ENCODE measurements at regions of chr3 and their contacts with region 1.

Region 1: DNA sequence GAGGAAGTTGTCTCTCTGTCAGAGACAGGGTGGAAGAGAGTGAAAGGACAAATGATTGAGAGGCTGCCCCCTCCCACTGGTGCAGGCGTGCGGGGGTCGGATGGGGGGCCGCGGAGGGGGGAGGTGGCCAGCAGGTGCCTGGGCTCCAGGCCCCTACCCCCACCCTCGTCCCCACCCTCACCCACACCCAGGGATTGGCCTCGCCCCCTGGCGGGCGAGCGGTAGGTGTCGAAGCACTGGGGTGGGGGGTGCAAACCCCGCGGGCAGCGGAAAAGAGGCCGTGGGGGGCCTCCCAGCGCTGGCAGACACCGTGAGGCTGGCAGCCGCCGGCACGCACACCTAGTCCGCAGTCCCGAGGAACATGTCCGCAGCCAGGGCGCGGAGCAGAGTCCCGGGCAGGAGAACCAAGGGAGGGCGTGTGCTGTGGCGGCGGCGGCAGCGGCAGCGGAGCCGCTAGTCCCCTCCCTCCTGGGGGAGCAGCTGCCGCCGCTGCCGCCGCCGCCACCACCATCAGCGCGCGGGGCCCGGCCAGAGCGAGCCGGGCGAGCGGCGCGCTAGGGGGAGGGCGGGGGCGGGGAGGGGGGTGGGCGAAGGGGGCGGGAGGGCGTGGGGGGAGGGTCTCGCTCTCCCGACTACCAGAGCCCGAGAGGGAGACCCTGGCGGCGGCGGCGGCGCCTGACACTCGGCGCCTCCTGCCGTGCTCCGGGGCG is at the start of gene KAT2B:
- DNase-seq: peak; percentile 66 to 94 (median 81)
- ATAC-seq: peak; percentile 66
- H3K4me3 ChIP-seq: peak within 1 kb of the TSS; percentile 94
- H3K4me3 Mint-ChIP-seq: peak within 1 kb of the TSS; percentile 99
- H3K27ac ChIP-seq: peak within 1 kb of the TSS; percentile 86 to 90
- H3K27ac Mint-ChIP-seq: peak within 1 kb of the TSS; percentile 99
- H3K4me1 ChIP-seq: peaks cover 51% of the 10 kb centered on the region
- H3K4me1 Mint-ChIP-seq: peaks cover 60% of the 10 kb centered on the region
- H3K27me3 ChIP-seq: no peaks in the 10 kb centered on the region
- H3K27me3 Mint-ChIP-seq: no peaks in the 10 kb centered on the region
- CTCF ChIP-seq: peak; percentile 90
- total RNA-seq, gene KAT2B: 50.9 to 54.4 TPM

Region 2: DNA sequence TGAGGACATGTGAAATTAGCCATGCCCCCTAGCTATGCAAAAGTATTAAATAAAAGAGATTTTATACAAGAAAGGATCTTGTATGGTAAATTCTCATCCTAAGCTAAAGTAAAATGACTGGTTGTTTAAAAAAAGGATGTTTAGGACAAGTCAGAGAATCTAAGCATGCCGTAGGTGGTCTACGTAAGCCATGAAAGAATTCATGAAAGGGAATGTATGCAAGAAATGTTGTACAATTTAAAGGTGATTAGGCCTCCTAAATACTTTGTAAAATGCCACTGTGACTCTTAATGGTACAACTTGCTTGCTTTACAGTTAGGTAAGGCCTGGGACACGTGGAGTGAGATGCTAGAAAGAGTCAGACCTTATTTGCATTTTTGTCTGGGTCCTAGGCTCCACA is 314.9 kb before region 1 on chr3:
- CTCF ChIA-PET with region 1: no interaction called
- POLR2A ChIA-PET with region 1: no interaction called
- intact Hi-C with region 1: no loop called
- DNase-seq: no peak
- ATAC-seq: no peak
- H3K4me3 ChIP-seq: no peak overlapping the region
- H3K4me3 Mint-ChIP-seq: no peak overlapping the region
- H3K27ac ChIP-seq: no peak overlapping the region
- H3K27ac Mint-ChIP-seq: no peak overlapping the region
- H3K4me1 ChIP-seq: no peaks in the 10 kb centered on the region
- H3K4me1 Mint-ChIP-seq: no peaks in the 10 kb centered on the region
- H3K27me3 ChIP-seq: no peaks in the 10 kb centered on the region
- H3K27me3 Mint-ChIP-seq: no peaks in the 10 kb centered on the region
- CTCF ChIP-seq: no peak

Region 3: DNA sequence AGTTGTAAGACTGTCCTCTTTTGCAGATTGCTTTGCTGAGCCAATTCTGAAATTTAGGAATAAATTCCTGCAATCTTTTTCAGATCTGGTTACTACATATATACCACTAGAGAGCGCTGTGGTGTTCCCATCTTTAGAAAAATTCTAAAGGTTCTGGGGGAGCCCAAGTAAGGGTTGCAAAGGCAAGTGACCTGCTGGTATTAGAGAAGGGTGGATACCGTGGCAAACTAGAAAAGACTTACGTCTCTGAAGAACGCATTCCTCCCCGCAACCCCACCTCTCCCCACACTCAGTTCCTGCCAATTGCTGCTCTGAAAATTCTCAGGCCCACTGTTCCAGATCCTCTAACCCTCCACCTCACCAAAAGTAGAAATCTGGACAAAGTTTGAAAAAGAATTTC is 154.5 kb before region 1 on chr3:
- CTCF ChIA-PET with region 1: no interaction called
- POLR2A ChIA-PET with region 1: no interaction called
- intact Hi-C with region 1: loop called in 1 of 2 experiments (anchors 5 kb)
- DNase-seq: peak in 3 of 14 experiments; percentile 38 to 50 (median 46)
- ATAC-seq: no peak
- H3K4me3 ChIP-seq: no peak overlapping the region
- H3K4me3 Mint-ChIP-seq: no peak overlapping the region
- H3K27ac ChIP-seq: no peak overlapping the region
- H3K27ac Mint-ChIP-seq: no peak overlapping the region
- H3K4me1 ChIP-seq: no peaks in the 10 kb centered on the region
- H3K4me1 Mint-ChIP-seq: no peaks in the 10 kb centered on the region
- H3K27me3 ChIP-seq: no peaks in the 10 kb centered on the region
- H3K27me3 Mint-ChIP-seq: no peaks in the 10 kb centered on the region
- CTCF ChIP-seq: peak; percentile 63

Region 4: DNA sequence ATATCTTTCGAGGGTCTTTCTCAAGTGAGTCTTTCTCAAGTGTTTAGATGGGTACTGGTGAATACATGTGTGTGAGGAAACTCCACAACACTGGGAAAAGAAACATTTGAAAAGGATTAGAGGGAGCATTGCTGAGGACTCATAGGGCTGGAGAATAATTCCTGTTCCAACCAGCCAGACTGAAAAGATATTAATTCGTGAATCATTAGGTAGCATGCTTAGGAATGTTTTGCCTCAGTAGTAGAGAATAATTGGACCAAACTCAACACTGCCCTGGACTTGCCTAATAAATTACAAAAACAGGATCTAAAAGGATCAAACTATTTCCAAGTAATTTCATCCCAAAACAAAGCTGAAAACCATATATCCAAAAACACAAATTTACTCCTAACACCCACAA is 45.1 kb before region 1 on chr3:
- CTCF ChIA-PET with region 1: no interaction called
- POLR2A ChIA-PET with region 1: interaction called, 4 read pairs
- intact Hi-C with region 1: loop called (anchors 5 to 10 kb)
- DNase-seq: no peak
- ATAC-seq: no peak
- H3K4me3 ChIP-seq: no peak overlapping the region
- H3K4me3 Mint-ChIP-seq: no peak overlapping the region
- H3K27ac ChIP-seq: no peak overlapping the region
- H3K27ac Mint-ChIP-seq: no peak overlapping the region
- H3K4me1 ChIP-seq: no peaks in the 10 kb centered on the region
- H3K4me1 Mint-ChIP-seq: no peaks in the 10 kb centered on the region
- H3K27me3 ChIP-seq: no peaks in the 10 kb centered on the region
- H3K27me3 Mint-ChIP-seq: no peaks in the 10 kb centered on the region
- CTCF ChIP-seq: no peak

Region 5: GRCh38 chr3:20074226-20075063 is 34.5 kb after region 1 on chr3:
- CTCF ChIA-PET with region 1: interaction called, 3 read pairs
- POLR2A ChIA-PET with region 1: interaction called, 6 read pairs
- intact Hi-C with region 1: loop called in 1 of 2 experiments (anchors 5 kb)
- DNase-seq: no peak
- ATAC-seq: no peak
- H3K4me3 ChIP-seq: no peak overlapping the region
- H3K4me3 Mint-ChIP-seq: no peak overlapping the region
- H3K27ac ChIP-seq: no peak overlapping the region
- H3K27ac Mint-ChIP-seq: no peak overlapping the region
- H3K4me1 ChIP-seq: peaks cover 2% of the 10 kb centered on the region
- H3K4me1 Mint-ChIP-seq: peaks cover 4% of the 10 kb centered on the region
- H3K27me3 ChIP-seq: no peaks in the 10 kb centered on the region
- H3K27me3 Mint-ChIP-seq: no peaks in the 10 kb centered on the region
- CTCF ChIP-seq: no peak

Region 6: DNA sequence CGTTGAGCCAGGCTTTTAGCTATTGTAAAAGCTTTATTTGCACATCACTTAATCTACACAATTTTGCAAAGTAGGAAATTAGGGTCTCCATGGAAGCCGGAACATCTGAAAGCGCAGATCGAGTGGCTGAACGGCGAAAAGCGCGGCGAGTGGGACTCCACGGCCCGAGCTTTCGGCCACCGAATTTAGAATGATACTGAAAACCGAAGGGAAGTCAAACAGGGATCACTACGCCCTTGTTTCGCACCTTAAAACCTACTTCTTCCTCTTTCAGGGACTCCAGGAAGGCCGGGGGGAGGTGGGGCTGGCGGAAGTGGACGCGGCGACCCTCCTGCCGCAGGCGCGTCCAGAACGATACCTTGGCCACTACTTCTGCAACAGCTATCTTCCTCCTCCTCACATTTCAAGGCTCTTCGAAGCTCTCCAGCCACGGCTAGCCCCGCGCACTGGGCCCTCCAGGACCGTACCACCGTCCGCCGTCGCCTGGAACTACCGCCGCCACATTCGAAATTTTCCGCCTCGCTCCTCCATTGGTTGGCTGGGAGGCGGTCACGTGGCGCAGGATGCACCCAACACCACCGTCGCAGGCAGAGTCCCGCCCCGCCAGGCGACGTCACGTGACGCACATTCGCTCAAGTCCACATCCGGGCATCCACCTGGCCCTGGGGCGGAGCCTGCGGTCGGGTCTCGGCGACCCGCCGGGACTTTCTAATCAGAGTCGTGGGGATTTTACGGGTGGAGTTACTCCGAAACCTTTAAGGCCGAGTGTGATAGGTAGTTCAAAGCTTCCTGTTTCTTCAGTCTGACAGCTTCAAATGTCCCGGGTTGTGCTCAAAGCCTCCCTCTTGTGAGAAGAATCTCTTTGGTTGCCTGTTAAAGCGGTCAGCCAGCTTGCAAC is 146.0 kb after region 1 on chr3 and contains the start of gene SGO1:
- CTCF ChIA-PET with region 1: interaction called, 3 read pairs
- POLR2A ChIA-PET with region 1: interaction called, 29 read pairs
- intact Hi-C with region 1: loop called (anchors 2 kb)
- DNase-seq: peak; percentile 98 to 100 (median 100)
- ATAC-seq: peak; percentile 90
- H3K4me3 ChIP-seq: peak within 1 kb of the TSS; percentile 81
- H3K4me3 Mint-ChIP-seq: no peak within 1 kb of the TSS
- H3K27ac ChIP-seq: peak within 1 kb of the TSS; percentile 92 to 97
- H3K27ac Mint-ChIP-seq: no peak within 1 kb of the TSS
- H3K4me1 ChIP-seq: peaks cover 26% of the 10 kb centered on the region
- H3K4me1 Mint-ChIP-seq: no peaks in the 10 kb centered on the region
- H3K27me3 ChIP-seq: no peaks in the 10 kb centered on the region
- H3K27me3 Mint-ChIP-seq: no peaks in the 10 kb centered on the region
- CTCF ChIP-seq: no peak
- total RNA-seq, gene SGO1: not detected

Region 7: GRCh38 chr3:21390136-21390535 is 1350.2 kb after region 1 on chr3:
- CTCF ChIA-PET with region 1: no interaction called
- POLR2A ChIA-PET with region 1: no interaction called
- intact Hi-C with region 1: no loop called
- DNase-seq: no peak
- ATAC-seq: no peak
- H3K4me3 ChIP-seq: no peak overlapping the region
- H3K4me3 Mint-ChIP-seq: no peak overlapping the region
- H3K27ac ChIP-seq: no peak overlapping the region
- H3K27ac Mint-ChIP-seq: no peak overlapping the region
- H3K4me1 ChIP-seq: no peaks in the 10 kb centered on the region
- H3K4me1 Mint-ChIP-seq: no peaks in the 10 kb centered on the region
- H3K27me3 ChIP-seq: no peaks in the 10 kb centered on the region
- H3K27me3 Mint-ChIP-seq: no peaks in the 10 kb centered on the region
- CTCF ChIP-seq: no peak